Adrenal gland (tissue), 19 donors: ENCODE measurements at regions of chr11 and their contacts with region 1.

Region 1: GRCh38 chr11:130213143-130213978 is 53.8 kb downstream of the ST14 start:
- DNase-seq: peak; percentile 43 to 72 (median 50)
- H3K4me3 ChIP-seq: no peak overlapping the region
- H3K27ac ChIP-seq: no peak overlapping the region
- H3K4me1 ChIP-seq: no peaks in the 10 kb centered on the region
- H3K27me3 ChIP-seq: no peaks in the 10 kb centered on the region
- CTCF ChIP-seq: peak; percentile 83 to 99 (median 92)
- POLR2A ChIP-seq: no peak

Region 2: GRCh38 chr11:129815596-129816461 is 397.5 kb before region 1 on chr11 and contains the start of gene TMEM45B:
- intact Hi-C with region 1: no loop called
- DNase-seq: peak in 1 of 7 donors; percentile 58
- H3K4me3 ChIP-seq: no peak within 1 kb of the TSS
- H3K27ac ChIP-seq: no peak within 1 kb of the TSS
- H3K4me1 ChIP-seq: no peaks in the 10 kb centered on the region
- H3K27me3 ChIP-seq: peaks cover 8% of the 10 kb centered on the region
- CTCF ChIP-seq: no peak
- POLR2A ChIP-seq: no peak
- total RNA-seq, gene TMEM45B: 0.06 to 1.4 (median 0.34) TPM in 5 of 9 donors, not detected in the others

Region 3: GRCh38 chr11:129930296-129930695 is 283.1 kb before region 1 on chr11:
- intact Hi-C with region 1: no loop called
- DNase-seq: peak in 1 of 7 donors; percentile 19
- H3K4me3 ChIP-seq: no peak overlapping the region
- H3K27ac ChIP-seq: no peak overlapping the region
- H3K4me1 ChIP-seq: no peaks in the 10 kb centered on the region
- H3K27me3 ChIP-seq: no peaks in the 10 kb centered on the region
- CTCF ChIP-seq: no peak
- POLR2A ChIP-seq: no peak

Region 4: DNA sequence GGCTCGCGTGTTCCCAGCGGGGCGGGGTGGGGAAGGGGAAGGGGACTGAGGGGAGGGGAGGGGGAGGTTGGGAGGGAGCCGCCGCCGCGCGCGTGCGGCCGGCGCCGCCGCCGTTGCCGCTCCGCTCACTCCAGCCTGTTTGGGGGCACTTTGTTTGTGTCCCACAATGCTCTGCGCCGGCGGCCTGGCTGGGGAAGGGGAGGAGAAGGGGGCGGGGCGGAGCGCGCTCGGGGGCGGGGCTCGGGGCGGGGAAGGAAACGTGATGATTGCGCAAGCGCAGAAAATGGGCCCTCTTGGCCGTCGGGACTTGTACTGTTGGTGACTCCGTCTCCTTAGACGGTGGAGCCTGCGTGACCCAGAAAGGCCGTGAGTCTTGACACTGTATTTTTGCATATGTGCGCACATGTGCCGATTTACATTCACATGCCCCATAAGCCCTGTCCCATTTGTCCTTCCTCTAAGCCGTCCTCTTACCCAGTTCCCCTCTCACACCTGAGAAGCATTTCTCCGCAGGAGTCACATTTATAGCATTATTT is 101.5 kb after region 1 on chr11 and contains the start of gene ZBTB44:
- intact Hi-C with region 1: loop called in 1 of 2 experiments (anchors 10 kb)
- DNase-seq: peak; percentile 92 to 96 (median 94)
- H3K4me3 ChIP-seq: peak within 1 kb of the TSS; percentile 34 to 97 (median 69)
- H3K27ac ChIP-seq: peak within 1 kb of the TSS; percentile 74 to 91 (median 88)
- H3K4me1 ChIP-seq: peaks cover 9 to 33% of the 10 kb centered on the region in 2 donors
- H3K27me3 ChIP-seq: no peaks in the 10 kb centered on the region
- CTCF ChIP-seq: no peak
- POLR2A ChIP-seq: peak in 1 of 2 donors; percentile 52
- total RNA-seq, gene ZBTB44: 25.5 to 94.3 (median 49.3) TPM

Region 5: GRCh38 chr11:130427581-130428315 is 214.4 kb after region 1 on chr11:
- intact Hi-C with region 1: loop called (anchors 5 kb)
- DNase-seq: no peak
- H3K4me3 ChIP-seq: peak overlapping the region in 1 of 4 donors; percentile 47
- H3K27ac ChIP-seq: no peak overlapping the region
- H3K4me1 ChIP-seq: peaks cover 6% of the 10 kb centered on the region in 2 donors
- H3K27me3 ChIP-seq: peaks cover 49% of the 10 kb centered on the region
- CTCF ChIP-seq: no peak
- POLR2A ChIP-seq: no peak

Region 6: DNA sequence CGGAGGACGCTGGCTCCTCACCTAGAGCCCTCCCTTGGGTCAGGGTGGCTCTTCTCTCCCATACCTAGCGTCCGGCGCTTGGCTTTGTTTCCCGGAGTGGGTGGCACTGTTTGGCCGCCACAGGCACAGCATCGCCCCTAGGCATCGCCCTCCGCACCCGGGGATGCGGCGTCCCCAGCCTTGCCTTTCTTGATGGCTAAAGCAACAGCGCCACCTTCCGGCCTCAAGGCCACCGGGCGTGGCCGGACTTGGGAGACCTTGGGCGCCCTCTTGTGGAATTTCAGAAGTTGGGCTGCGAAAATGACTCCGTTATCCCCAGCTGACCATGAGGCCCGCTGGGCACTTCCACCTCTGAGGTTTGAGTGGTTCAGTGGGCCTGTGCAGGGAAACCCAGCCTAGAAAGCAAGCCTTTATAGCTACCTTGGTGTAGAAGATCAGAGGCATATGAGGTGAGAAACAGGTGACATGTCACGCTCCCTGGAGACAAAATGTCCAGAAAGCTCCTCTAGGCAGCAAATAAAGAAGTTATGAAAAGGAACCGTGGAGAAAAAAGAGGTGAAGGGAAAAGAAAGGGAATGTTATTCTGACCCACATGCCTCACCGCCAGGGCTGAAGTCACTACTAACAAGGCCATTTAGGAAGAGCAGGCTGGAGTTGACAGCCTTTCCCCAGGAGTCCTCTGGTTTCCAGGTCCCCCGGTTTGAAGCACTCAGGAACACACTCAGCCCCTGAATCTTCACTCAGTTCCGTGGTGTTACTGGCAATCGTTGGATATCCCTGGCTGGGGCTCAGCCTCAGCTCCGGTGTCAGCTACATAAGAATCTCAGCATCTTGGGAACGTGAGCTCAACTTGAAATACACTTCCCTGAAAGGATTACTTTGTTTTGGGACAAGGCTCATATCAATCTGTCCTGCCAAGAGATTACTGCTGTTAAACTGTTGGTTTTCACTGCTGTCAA is 648.8 kb after region 1 on chr11:
- intact Hi-C with region 1: loop called in 1 of 2 experiments (anchors 5 kb)
- DNase-seq: peak; percentile 87 to 97 (median 92)
- H3K4me3 ChIP-seq: no peak overlapping the region
- H3K27ac ChIP-seq: no peak overlapping the region
- H3K4me1 ChIP-seq: no peaks in the 10 kb centered on the region
- H3K27me3 ChIP-seq: no peaks in the 10 kb centered on the region
- CTCF ChIP-seq: peak; percentile 99 to 100 (median 100)
- POLR2A ChIP-seq: no peak